PC-3 (cell line): ENCODE measurements at regions of chr7 and their contacts with region 1.

Region 1: GRCh38 chr7:137656227-137656849 is 190.4 kb downstream of the DGKI start:
- DNase-seq: peak; percentile 81
- ATAC-seq: peak; percentile 86
- H3K4me3 ChIP-seq: no peak overlapping the region
- H3K27ac ChIP-seq: no peak overlapping the region
- H3K4me1 ChIP-seq: peaks cover 13% of the 10 kb centered on the region; the same call in 1 of the 2 replicates
- H3K27me3 ChIP-seq: 0 out of 2 replicates have a peak, but pooled peaks cover 5% of the 10 kb centered on the region
- CTCF ChIP-seq: peak; percentile 85

Region 2: DNA sequence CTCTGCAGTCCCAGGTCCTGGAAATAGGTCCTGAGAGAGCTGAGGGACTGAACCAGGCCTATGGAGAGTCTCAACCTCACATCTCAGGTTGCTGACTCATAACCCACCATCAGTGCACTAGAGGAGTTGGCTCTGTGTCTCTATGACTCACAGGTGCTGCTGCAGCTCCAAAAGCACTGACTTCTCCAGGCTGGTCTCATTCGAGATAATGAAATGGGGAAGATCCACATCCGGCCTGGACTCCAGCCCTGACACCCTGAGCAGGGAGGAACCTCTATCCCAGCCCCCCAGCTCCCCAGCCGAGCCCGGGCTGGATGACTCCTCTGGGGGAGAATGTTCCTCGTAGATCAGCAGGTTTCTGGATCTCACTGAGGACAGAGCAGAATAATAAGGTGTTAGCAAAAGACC is 225.9 kb after region 1 on chr7:
- CTCF ChIA-PET with region 1: no interaction called
- POLR2A ChIA-PET with region 1: no interaction called
- intact Hi-C with region 1: loop called (anchors 5 kb)
- DNase-seq: peak; percentile 94
- ATAC-seq: peak; percentile 97
- H3K4me3 ChIP-seq: peak overlapping the region; percentile 14; the same call in 1 of the 2 replicates
- H3K27ac ChIP-seq: peak overlapping the region; percentile 70
- H3K4me1 ChIP-seq: peaks cover 15% of the 10 kb centered on the region
- H3K27me3 ChIP-seq: no peaks in the 10 kb centered on the region
- CTCF ChIP-seq: no peak